Posterior vena cava (tissue), 2 donors: ENCODE measurements at regions of chr3 and their contacts with region 1.

Region 1: GRCh38 chr3:13748276-13748879 is 131.5 kb downstream of the WNT7A start:
- DNase-seq: no peak

Region 2: GRCh38 chr3:13710251-13710650 is 38.1 kb before region 1 on chr3:
- intact Hi-C with region 1: loop called in 1 of 2 experiments (anchors 1 kb)
- DNase-seq: peak; percentile 44

Region 3: GRCh38 chr3:13767896-13768295 is 19.5 kb after region 1 on chr3:
- intact Hi-C with region 1: loop called in 1 of 2 experiments (anchors 2 kb)
- DNase-seq: peak; percentile 70